AG04450 (cell line): ENCODE measurements at regions of chr19 and their contacts with region 1.

Region 1: DNA sequence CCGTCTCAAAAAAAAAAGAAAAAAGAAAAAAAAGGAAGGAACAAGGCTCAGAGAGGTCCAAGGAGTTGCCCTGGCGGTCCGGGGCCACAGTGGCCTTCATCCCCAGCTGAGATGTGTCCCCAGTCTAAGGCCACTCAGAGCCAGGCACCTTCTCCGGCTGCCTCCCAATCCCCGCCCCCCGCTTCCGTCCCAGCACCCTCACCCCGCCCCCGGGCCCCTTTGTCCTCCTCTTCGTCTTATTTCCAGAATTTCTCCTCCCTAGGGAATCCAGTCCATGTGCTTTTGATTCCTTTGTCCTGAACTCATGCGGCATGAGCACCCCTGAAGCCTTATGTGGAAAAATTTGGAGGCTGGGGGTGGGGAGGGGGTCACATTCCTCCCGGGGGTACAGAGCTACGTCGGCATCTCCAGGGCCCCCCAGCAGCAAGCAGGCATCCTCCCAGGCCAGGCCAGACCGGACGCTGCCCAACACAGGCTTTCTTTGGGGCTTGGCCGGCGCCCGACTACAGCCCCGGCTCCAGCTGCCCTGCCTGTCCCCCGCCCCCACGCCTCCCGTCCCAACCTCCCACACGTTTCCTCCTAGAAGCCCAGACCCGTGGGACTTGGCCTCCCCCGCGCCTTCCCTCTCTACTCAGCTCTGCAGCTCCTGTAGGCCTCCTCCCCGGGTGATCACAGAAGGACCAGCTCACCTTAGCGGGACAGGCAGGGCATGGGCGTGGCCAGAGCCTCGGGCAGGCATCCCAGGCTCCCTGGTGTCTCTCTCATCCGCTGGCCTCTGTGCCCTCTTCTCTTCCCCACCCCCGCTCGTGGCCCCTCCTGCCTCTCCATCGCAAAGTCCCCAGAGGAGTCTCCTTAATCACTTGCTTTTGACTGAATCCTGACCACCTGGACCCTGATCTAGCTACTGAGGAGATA is 17.8 kb upstream of the ADGRE5 start:
- DNase-seq: no peak
- H3K4me3 ChIP-seq: peak overlapping the region; percentile 41
- H3K27ac ChIP-seq: peak overlapping the region; percentile 31
- H3K27me3 ChIP-seq: no peaks in the 10 kb centered on the region
- CTCF ChIP-seq: no peak

Region 2: GRCh38 chr19:14310055-14310454 is 53.4 kb before region 1 on chr19:
- CTCF ChIA-PET with region 1: interaction called, 11 read pairs
- POLR2A ChIA-PET with region 1: interaction called, 3 read pairs
- DNase-seq: no peak
- H3K4me3 ChIP-seq: no peak overlapping the region
- H3K27ac ChIP-seq: no peak overlapping the region
- H3K27me3 ChIP-seq: peaks cover 21% of the 10 kb centered on the region
- CTCF ChIP-seq: no peak

Region 3: GRCh38 chr19:14383661-14384555 is 20.5 kb after region 1 on chr19:
- CTCF ChIA-PET with region 1: interaction called, 13 read pairs
- POLR2A ChIA-PET with region 1: interaction called, 4 read pairs
- DNase-seq: no peak
- H3K4me3 ChIP-seq: peak overlapping the region; percentile 31
- H3K27ac ChIP-seq: peak overlapping the region; percentile 53
- H3K27me3 ChIP-seq: no peaks in the 10 kb centered on the region
- CTCF ChIP-seq: peak; percentile 34; the same call in 1 of the 2 replicates